ENCODE measurements at regions of chr5 and their contacts with region 1.

Region 1: DNA sequence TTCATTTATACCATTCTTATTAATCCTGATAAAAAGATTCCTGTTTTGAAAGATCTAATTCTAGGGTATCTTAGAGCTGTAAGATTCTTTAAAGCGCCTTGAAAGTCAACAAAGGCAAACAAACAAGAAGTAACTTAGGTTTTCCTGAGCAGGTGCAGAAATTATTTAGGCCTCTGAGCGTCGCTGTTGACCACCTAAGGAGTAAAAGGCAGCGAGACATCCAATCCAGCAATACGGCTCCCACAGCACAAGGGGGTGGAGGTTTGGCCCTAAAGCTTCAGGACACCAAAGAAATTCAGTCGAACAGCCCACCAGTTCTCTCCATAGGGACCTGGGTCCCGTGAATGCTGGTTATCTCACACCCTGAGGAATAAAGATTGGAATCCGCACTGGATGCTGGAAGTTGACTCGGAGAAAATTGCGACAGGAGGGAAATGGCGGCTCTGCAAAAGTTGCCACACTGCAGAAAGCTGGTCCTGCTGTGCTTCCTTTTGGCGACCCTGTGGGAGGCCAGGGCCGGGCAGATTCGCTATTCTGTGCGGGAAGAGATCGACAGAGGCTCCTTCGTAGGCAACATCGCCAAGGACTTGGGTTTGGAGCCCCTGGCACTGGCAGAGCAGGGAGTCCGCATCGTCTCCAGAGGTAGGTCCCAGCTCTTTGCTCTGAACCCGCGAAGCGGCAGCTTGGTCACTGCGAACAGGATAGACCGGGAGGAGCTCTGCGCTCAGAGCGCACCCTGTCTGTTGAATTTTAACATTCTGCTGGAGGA is at the start of gene PCDHGA2:
- DNase-seq: peak; percentile 37
- ATAC-seq: no peak
- H3K4me3 Mint-ChIP-seq: no peak within 1 kb of the TSS
- H3K27ac Mint-ChIP-seq: no peak within 1 kb of the TSS
- H3K4me1 Mint-ChIP-seq: no peaks in the 10 kb centered on the region
- H3K27me3 Mint-ChIP-seq: peaks cover 54% of the 10 kb centered on the region
- CTCF ChIP-seq: peak; percentile 26
- total RNA-seq, gene PCDHGA2: not detected

Region 2: DNA sequence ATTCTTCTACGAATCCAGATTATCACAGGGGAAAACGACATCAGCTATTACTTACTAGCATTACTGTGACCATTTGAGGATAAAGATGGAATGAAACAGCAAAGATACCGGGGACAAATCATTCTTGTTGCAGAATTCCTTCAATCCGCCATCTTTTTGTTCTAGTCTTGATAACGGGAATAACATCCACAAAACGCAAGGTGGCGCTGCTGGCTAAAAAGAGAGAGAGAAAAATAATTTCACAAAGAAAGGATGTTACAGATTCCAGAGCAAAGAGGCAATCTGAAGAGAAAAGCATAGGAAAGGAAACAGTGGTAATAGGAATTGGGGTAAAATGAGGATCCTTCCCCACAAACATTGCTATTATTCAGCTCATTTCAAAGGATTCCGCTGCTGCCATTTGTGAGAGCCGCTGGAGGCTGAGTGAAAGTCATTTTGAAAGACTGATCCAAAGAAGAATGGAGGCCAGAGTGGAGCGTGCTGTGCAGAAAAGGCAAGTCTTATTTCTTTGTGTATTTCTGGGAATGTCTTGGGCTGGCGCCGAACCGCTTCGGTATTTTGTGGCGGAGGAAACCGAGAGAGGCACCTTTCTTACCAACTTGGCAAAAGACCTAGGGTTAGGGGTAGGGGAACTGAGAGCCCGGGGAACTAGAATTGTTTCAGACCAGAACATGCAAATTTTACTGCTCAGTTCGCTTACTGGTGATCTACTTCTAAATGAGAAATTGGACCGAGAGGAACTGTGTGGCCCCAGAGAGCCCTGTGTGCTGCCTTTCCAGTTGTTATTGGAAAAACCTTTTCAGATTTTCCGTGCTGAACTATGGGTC is 166.1 kb before region 1 on chr5 and contains the start of gene PCDHB7:
- CTCF ChIA-PET with region 1: no interaction called
- POLR2A ChIA-PET with region 1: no interaction called
- intact Hi-C with region 1: no loop called
- DNase-seq: peak; percentile 26
- ATAC-seq: no peak
- H3K4me3 Mint-ChIP-seq: no peak within 1 kb of the TSS
- H3K27ac Mint-ChIP-seq: no peak within 1 kb of the TSS
- H3K4me1 Mint-ChIP-seq: peaks cover 4% of the 10 kb centered on the region
- H3K27me3 Mint-ChIP-seq: peaks cover 35% of the 10 kb centered on the region
- CTCF ChIP-seq: peak; percentile 73
- total RNA-seq, gene PCDHB7: not detected

Region 3: GRCh38 chr5:141320225-141321169 is 18.2 kb before region 1 on chr5 and contains the start of gene TAF7:
- CTCF ChIA-PET with region 1: interaction called, 17 read pairs
- POLR2A ChIA-PET with region 1: interaction called, 4 read pairs
- intact Hi-C with region 1: no loop called
- DNase-seq: peak; percentile 93
- ATAC-seq: peak; percentile 93
- H3K4me3 Mint-ChIP-seq: peak within 1 kb of the TSS; percentile 95
- H3K27ac Mint-ChIP-seq: peak within 1 kb of the TSS; percentile 98
- H3K4me1 Mint-ChIP-seq: peaks cover 25% of the 10 kb centered on the region
- H3K27me3 Mint-ChIP-seq: no peaks in the 10 kb centered on the region
- CTCF ChIP-seq: peak; percentile 89
- total RNA-seq, gene TAF7: 56.2 to 58.1 TPM

Region 4: DNA sequence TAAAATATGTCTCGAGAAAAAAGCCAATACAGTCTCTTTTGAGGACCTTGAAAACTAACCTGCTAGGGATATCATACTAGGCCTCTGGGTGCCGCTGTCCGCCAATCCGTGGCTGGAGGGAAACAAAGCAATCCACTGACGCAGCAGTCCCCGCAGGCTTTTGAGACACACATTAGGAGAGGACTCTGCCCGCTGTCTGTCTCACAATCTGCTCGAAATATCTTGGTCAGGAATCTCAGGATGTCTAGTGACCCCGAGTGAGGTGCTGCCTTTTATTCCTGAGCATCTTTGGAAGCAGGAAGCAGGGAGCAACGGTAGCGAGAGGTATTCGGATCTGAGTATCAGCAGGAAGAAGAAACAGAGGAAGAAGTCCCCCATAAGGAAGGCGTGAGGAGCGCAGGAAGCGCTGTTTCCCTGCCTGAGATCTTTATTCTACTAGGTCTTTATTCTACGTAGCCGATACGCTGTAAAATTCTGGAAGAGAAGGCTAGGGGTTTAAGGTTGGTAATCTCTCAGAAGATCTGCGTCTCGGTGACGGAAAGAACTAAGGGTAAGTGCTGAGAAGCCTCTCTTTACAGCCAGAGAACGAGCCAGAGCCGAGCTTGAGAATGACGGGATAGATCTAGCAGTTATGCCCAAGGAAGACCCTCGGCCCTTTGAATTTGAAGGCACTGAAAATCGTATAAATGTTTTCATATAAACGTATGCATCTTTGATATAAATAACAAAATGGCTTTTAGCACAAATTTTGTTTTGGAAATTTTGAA is 12.5 kb before region 1 on chr5:
- CTCF ChIA-PET with region 1: interaction called, 11 read pairs
- POLR2A ChIA-PET with region 1: no interaction called
- intact Hi-C with region 1: no loop called
- DNase-seq: peak; percentile 84
- ATAC-seq: peak; percentile 96
- H3K4me3 Mint-ChIP-seq: peak overlapping the region; percentile 79
- H3K27ac Mint-ChIP-seq: peak overlapping the region; percentile 81
- H3K4me1 Mint-ChIP-seq: peaks cover 4% of the 10 kb centered on the region
- H3K27me3 Mint-ChIP-seq: peaks cover 24% of the 10 kb centered on the region
- CTCF ChIP-seq: peak; percentile 51